ENCODE measurements at regions of chr14 and their contacts with region 1.

Region 1: GRCh38 chr14:60220084-60220483 is 28.9 kb upstream of the PPM1A start:
- DNase-seq: peak; percentile 82
- ATAC-seq: peak; percentile 72
- H3K4me3 ChIP-seq: no peak overlapping the region
- H3K27ac ChIP-seq: peak overlapping the region; percentile 49
- H3K4me1 ChIP-seq: peaks cover 28% of the 10 kb centered on the region
- H3K27me3 ChIP-seq: no peaks in the 10 kb centered on the region
- CTCF ChIP-seq: no peak
- EP300 ChIP-seq: no peak
- POLR2A ChIP-seq: no peak
- RAD21 ChIP-seq: no peak

Region 2: DNA sequence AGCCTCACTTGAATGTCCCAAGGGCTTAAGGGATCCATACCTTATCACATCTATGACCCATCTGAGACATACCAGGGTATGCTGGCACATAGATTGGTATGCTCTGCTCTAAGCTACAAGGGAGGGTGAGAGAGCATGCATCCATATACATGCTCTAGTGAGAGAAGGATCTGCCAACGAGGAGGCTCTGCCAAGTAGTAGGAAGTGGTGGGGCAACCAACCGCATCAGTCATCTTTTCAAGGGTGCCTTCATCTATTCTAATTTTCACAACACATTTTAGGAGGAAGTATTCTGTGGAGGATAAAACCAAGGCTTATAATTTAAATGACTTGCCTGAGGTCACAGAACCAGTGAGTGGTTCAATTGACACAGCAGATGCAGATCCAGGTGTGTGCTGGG is 22.3 kb after region 1 on chr14:
- CTCF ChIA-PET with region 1: interaction called, 38 read pairs
- POLR2A ChIA-PET with region 1: interaction called, 251 read pairs
- RAD21 ChIA-PET with region 1: interaction called, 446 read pairs
- SMC1A ChIA-PET with region 1: interaction called, 117 read pairs
- in situ Hi-C with region 1: no loop called
- intact Hi-C with region 1: no loop called
- DNase-seq: no peak
- ATAC-seq: no peak
- H3K4me3 ChIP-seq: no peak overlapping the region
- H3K27ac ChIP-seq: no peak overlapping the region
- H3K4me1 ChIP-seq: peaks cover 10% of the 10 kb centered on the region
- H3K27me3 ChIP-seq: no peaks in the 10 kb centered on the region
- CTCF ChIP-seq: no peak
- EP300 ChIP-seq: no peak
- POLR2A ChIP-seq: no peak
- RAD21 ChIP-seq: no peak

Region 3: DNA sequence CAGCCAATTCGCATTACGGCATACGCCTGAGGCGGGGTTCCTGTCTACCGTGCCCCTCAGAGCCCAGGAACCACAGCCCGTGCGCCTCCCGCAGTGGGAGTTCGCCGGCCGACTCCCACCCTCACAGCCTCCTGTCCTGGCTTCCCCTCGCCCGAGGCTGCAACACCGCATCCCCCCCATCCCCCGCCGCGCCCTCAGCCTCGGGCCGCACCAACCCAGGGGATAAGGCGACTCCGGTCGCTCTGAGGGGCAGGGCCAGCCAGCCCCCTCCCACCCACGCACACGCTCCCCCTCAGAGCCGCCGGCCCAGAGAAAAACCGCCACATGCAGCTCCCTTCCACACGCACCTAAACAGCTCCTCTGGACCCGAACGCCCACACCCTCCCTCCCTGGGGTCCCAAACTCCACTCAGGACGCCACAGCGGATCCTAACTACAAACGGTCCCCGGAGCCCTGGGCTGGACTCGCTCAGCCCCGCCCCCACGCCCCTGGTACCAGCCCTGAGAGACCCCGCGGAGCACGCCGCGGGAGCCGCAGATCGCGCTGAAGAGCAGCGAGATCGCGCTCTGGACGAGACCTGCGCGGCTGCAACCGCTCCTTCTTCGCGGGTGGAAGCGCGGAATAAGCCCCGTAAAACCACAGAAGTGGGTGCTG is 265.6 kb after region 1 on chr14 and contains the start of gene C14orf39:
- CTCF ChIA-PET with region 1: no interaction called
- POLR2A ChIA-PET with region 1: no interaction called
- RAD21 ChIA-PET with region 1: no interaction called
- SMC1A ChIA-PET with region 1: no interaction called
- in situ Hi-C with region 1: no loop called
- intact Hi-C with region 1: no loop called
- DNase-seq: no peak
- ATAC-seq: peak; percentile 18; the same call in 2 of the 3 replicates
- H3K4me3 ChIP-seq: no peak within 1 kb of the TSS
- H3K27ac ChIP-seq: no peak within 1 kb of the TSS
- H3K4me1 ChIP-seq: no peaks in the 10 kb centered on the region
- H3K27me3 ChIP-seq: peaks cover 0 to 3% of the 10 kb centered on the region in 2 experiments; a peak in 3 of 4 replicates
- CTCF ChIP-seq: no peak
- EP300 ChIP-seq: no peak
- POLR2A ChIP-seq: no peak; the same call in 1 of the 2 replicates
- RAD21 ChIP-seq: no peak
- polyA plus RNA-seq, gene C14orf39: 0.24 to 0.31 TPM

Region 4: DNA sequence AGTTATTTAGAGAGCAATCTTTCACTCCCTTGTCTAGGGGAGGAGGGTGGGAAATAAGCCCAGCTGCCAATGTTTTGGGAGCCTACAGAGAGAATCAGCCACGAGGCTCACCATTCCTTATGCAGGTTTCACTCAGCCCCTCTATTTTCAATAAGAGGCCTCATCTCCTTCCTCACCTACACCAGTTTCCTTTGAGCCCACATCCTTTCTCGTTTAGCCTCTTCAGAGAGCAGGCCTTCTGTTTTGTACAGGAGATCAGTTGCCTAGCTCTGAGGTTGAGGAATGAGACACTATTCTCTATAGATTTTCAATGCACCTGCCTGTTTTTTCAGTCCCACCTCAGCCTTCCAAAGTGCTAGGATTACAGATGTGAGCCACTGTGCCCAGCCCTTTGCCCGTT is 1560.0 kb after region 1 on chr14:
- CTCF ChIA-PET with region 1: no interaction called
- POLR2A ChIA-PET with region 1: no interaction called
- RAD21 ChIA-PET with region 1: no interaction called
- SMC1A ChIA-PET with region 1: no interaction called
- in situ Hi-C with region 1: no loop called
- intact Hi-C with region 1: no loop called
- DNase-seq: no peak
- ATAC-seq: peak; percentile 35
- H3K4me3 ChIP-seq: no peak overlapping the region
- H3K27ac ChIP-seq: peak overlapping the region; percentile 1; the same call in 1 of the 2 replicates
- H3K4me1 ChIP-seq: peaks cover 6% of the 10 kb centered on the region
- H3K27me3 ChIP-seq: no peaks in the 10 kb centered on the region
- CTCF ChIP-seq: no peak
- EP300 ChIP-seq: no peak
- POLR2A ChIP-seq: no peak
- RAD21 ChIP-seq: no peak